ENCODE measurements at regions of chr2 and their contacts with region 1.

Region 1: DNA sequence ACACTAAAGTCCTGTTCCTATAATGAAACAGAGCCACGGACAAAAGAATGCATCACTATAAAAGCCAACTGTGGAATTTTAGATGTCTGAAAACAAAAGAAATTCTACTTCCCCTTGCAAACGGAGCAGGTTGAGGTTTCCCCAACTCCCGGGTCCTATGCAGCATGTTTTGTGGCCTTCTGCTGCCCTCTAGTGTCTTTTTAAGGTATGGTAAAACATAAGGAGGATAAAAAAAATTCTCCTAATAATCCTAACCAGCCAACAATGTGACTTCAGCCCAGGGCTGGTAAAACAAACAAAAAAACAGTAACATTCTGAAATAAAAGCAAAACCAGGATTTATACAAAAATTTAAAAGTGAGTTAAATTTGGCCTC is 539.5 kb downstream of the NRXN1 start:
- DNase-seq: peak in 1 of 2 experiments; percentile 27
- H3K4me3 ChIP-seq: peak overlapping the region in 1 of 4 experiments; percentile 23; a peak in 1 of 8 replicates
- H3K27ac ChIP-seq: no peak overlapping the region
- H3K4me1 ChIP-seq: peaks cover 0 to 6% (median 2%) of the 10 kb centered on the region in 4 experiments; a peak in 3 of 7 replicates
- H3K27me3 ChIP-seq: no peaks in the 10 kb centered on the region
- CTCF ChIP-seq: peak; percentile 23 to 62 (median 58)
- EP300 ChIP-seq: no peak
- POLR2A ChIP-seq: no peak
- RAD21 ChIP-seq: peak; percentile 80 to 83

Region 2: GRCh38 chr2:50181212-50181611 is 311.3 kb before region 1 on chr2:
- CTCF ChIA-PET with region 1: no interaction called
- POLR2A ChIA-PET with region 1: no interaction called
- DNase-seq: no peak
- H3K4me3 ChIP-seq: no peak overlapping the region
- H3K27ac ChIP-seq: no peak overlapping the region
- H3K4me1 ChIP-seq: no peaks in the 10 kb centered on the region
- H3K27me3 ChIP-seq: no peaks in the 10 kb centered on the region
- CTCF ChIP-seq: no peak
- EP300 ChIP-seq: no peak
- POLR2A ChIP-seq: no peak
- RAD21 ChIP-seq: no peak

Region 3: GRCh38 chr2:50347358-50348044 is 145.0 kb before region 1 on chr2:
- CTCF ChIA-PET with region 1: interaction called, 29 read pairs
- POLR2A ChIA-PET with region 1: no interaction called
- DNase-seq: peak in 1 of 2 experiments; percentile 68
- H3K4me3 ChIP-seq: peak overlapping the region; percentile 44 to 79 (median 66)
- H3K27ac ChIP-seq: no peak overlapping the region
- H3K4me1 ChIP-seq: peaks cover 3 to 12% (median 7%) of the 10 kb centered on the region in 4 experiments
- H3K27me3 ChIP-seq: peaks cover 0 to 34% (median 23%) of the 10 kb centered on the region in 4 experiments; a peak in 6 of 7 replicates
- CTCF ChIP-seq: 0 out of 4 replicates have a peak, but pooled peaks of 1 of the 3 experiments have one; percentile 2
- EP300 ChIP-seq: peak in 1 of 2 experiments; percentile 78; a peak in 1 of 3 replicates
- POLR2A ChIP-seq: peak in 1 of 2 experiments; percentile 29; a peak in 1 of 3 replicates
- RAD21 ChIP-seq: no peak

Region 4: DNA sequence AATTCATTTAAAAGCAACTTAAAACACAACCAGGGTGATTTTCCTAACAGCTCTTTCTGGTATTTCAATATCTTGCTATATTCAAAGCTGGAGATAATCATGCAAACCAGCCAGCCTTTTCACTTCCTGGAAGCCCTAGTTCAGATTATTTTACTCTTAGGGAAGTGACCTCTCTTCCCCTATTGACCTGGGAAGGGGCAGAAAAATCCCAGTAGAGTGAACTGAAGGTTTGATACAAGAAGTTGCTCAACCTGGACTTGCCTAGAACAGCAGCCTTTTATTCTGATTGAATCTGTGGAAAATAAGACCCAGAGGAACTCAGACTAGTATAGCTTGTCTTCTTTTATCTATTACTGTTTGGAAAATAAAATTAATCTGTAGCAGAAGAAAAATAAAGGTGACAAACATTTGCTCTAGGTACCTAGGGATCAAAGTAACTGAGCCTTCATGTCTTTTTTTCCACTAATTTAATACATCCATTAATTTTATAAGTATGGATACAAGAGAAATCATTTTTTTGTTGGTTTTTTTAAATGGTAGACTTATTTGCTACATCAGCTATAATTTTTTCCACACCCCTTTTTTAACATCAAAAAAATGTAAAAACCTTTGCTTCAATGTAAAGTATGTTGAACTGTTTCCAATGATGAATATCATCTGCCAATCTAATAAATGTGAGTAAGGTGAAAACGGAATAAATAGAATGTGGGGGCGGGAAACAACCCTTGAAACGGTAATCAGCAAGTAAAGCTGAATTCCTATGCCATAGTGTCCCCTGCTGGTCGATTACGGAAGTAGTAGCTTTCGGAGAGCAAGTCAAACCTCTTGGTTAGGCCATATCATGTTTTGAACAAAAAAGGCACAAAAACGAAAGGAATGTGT is 90.5 kb before region 1 on chr2:
- CTCF ChIA-PET with region 1: interaction called, 23 read pairs
- POLR2A ChIA-PET with region 1: no interaction called
- DNase-seq: peak; percentile 29 to 84
- H3K4me3 ChIP-seq: no peak overlapping the region
- H3K27ac ChIP-seq: no peak overlapping the region
- H3K4me1 ChIP-seq: peaks cover 0 to 5% (median 3%) of the 10 kb centered on the region in 4 experiments; a peak in 3 of 7 replicates
- H3K27me3 ChIP-seq: no peaks in the 10 kb centered on the region
- CTCF ChIP-seq: peak; percentile 13 to 93 (median 77)
- EP300 ChIP-seq: no peak
- POLR2A ChIP-seq: no peak
- RAD21 ChIP-seq: peak; percentile 97 to 98

Region 5: DNA sequence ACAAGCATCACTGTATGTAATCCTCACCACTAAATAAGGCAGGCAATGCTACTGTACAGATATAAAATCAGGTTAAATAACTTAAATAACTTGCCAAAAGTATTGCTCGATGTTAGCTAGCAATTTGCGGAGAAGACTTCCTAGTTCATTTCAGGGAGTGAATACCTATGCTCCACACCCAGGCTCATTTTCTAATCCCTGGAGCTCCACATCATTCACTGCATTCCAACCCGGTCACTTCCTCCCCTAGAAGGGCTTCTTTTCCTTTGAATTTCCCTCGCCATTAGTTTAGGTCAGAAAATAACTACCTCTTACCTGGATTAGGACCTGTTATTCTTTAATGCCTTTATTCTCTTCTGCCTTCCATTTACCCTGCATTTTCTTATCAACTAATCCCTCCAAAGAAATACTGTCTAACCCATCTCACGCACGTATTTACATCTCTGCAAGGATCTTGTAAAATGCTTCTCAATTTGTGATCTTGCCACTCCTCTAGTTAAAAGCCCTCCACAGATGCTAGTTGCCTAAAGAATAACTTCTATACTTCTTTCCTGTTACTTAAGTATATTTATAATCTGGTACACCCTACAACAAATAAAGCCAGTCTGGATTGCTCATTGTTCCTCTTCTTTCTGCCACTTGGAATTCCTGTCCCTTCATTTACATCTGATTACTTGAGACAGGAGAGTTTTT is 60.4 kb before region 1 on chr2:
- CTCF ChIA-PET with region 1: interaction called, 10 read pairs
- POLR2A ChIA-PET with region 1: no interaction called
- DNase-seq: no peak
- H3K4me3 ChIP-seq: no peak overlapping the region
- H3K27ac ChIP-seq: no peak overlapping the region
- H3K4me1 ChIP-seq: peaks cover 0 to 6% (median 0%) of the 10 kb centered on the region in 4 experiments; a peak in 2 of 7 replicates
- H3K27me3 ChIP-seq: no peaks in the 10 kb centered on the region
- CTCF ChIP-seq: no peak
- EP300 ChIP-seq: no peak
- POLR2A ChIP-seq: no peak
- RAD21 ChIP-seq: no peak

Region 6: GRCh38 chr2:50476174-50476573 is 16.3 kb before region 1 on chr2:
- CTCF ChIA-PET with region 1: interaction called, 77 read pairs
- POLR2A ChIA-PET with region 1: no interaction called
- DNase-seq: no peak
- H3K4me3 ChIP-seq: no peak overlapping the region
- H3K27ac ChIP-seq: no peak overlapping the region
- H3K4me1 ChIP-seq: no peaks in the 10 kb centered on the region
- H3K27me3 ChIP-seq: no peaks in the 10 kb centered on the region
- CTCF ChIP-seq: peak in 2 of 3 experiments; percentile 51 to 63; a peak in 3 of 4 replicates
- EP300 ChIP-seq: no peak
- POLR2A ChIP-seq: no peak
- RAD21 ChIP-seq: peak; percentile 54 to 61

Region 7: GRCh38 chr2:50512397-50512796 is 19.9 kb after region 1 on chr2:
- CTCF ChIA-PET with region 1: interaction called, 11 read pairs
- POLR2A ChIA-PET with region 1: no interaction called
- DNase-seq: no peak
- H3K4me3 ChIP-seq: no peak overlapping the region
- H3K27ac ChIP-seq: no peak overlapping the region
- H3K4me1 ChIP-seq: peaks cover 0 to 6% (median 1%) of the 10 kb centered on the region in 4 experiments; a peak in 3 of 7 replicates
- H3K27me3 ChIP-seq: no peaks in the 10 kb centered on the region
- CTCF ChIP-seq: no peak
- EP300 ChIP-seq: no peak
- POLR2A ChIP-seq: no peak
- RAD21 ChIP-seq: no peak

Region 8: DNA sequence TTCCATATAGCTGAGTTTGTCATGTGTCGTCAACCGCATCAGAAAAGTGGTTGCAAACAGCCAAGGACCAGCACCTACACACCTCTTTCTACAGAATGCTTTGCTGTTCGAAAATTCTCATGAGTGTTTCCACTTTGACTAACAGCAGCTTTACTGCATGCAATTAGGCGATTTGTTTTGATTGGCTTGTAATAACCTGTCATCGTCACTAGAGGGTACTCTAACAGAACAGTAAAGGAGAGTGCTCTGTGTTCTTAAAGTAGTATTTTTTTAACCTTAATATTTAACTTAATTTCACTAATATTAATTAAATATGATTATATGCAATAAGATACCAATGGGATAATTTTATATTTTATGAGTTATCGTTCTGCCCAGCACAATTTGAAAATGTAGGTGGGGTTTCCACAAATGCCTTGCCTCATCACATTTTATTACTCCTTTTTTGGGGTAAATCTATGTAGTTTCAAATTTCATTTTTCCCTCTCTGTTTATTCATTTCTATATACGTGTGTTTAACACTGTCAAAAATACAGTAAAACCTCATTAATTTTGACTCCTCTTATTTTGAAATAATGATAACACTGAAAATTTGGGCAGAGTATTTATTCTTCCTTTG is 37.2 kb after region 1 on chr2:
- CTCF ChIA-PET with region 1: interaction called, 12 read pairs
- POLR2A ChIA-PET with region 1: no interaction called
- DNase-seq: no peak
- H3K4me3 ChIP-seq: no peak overlapping the region
- H3K27ac ChIP-seq: no peak overlapping the region
- H3K4me1 ChIP-seq: no peaks in the 10 kb centered on the region
- H3K27me3 ChIP-seq: no peaks in the 10 kb centered on the region
- CTCF ChIP-seq: peak in 2 of 3 experiments; percentile 52 to 63; a peak in 2 of 4 replicates
- EP300 ChIP-seq: no peak
- POLR2A ChIP-seq: no peak
- RAD21 ChIP-seq: peak; percentile 74 to 76

Region 9: GRCh38 chr2:50720697-50721315 is 228.3 kb after region 1 on chr2:
- CTCF ChIA-PET with region 1: no interaction called
- POLR2A ChIA-PET with region 1: no interaction called
- DNase-seq: no peak
- H3K4me3 ChIP-seq: no peak overlapping the region
- H3K27ac ChIP-seq: 0 out of 2 replicates have a peak overlapping the region, but pooled peaks have one; percentile 11
- H3K4me1 ChIP-seq: peaks cover 4 to 18% (median 16%) of the 10 kb centered on the region in 4 experiments; a peak in 5 of 7 replicates
- H3K27me3 ChIP-seq: no peaks in the 10 kb centered on the region
- CTCF ChIP-seq: no peak
- EP300 ChIP-seq: no peak
- POLR2A ChIP-seq: no peak
- RAD21 ChIP-seq: no peak